CD8-positive, alpha-beta T cell (primary cell): ENCODE measurements at regions of chr12 and their contacts with region 1.

Region 1: DNA sequence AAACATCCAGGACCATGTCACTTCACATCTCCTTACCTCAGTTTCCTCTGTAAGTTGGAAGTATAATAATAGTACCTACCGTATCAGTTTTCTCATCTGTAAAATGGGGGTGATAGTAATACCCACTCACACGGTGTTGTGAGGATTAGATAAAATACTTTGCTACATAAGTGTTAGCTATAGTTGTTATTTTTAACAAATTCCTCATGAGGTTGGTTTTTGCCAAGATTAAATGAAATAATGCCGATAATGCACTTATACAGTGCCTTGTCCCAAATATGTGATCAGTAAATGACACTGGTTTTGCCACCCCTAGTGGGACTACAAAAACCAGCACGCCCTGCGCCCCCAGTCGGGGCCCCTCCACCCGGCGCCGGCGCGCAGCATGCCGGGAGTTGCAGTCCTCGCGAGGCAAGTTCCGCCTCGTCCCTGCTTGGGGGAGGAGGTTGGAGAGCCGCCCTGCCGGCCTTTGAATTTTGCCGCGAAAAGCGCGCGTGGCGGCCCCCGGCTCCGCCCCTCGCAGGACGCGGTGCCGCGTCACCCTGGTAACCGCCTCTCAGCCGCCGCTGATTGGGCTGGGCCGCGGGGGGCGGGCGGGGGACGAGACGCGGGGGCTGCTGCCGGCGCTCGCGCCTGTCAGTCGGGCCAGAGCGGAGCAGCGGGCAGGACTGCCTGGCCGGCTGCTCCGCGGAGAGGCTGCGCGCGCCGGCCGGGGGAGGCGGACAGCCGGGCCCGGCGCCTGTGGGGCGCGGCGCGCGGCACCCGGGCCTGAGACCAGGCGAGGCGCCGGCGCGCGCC is at the start of gene FAM222A:
- DNase-seq: peak; percentile 95 to 99 (median 98)
- ATAC-seq: peak; percentile 88
- H3K4me3 ChIP-seq: peak within 1 kb of the TSS; percentile 54 to 55
- H3K4me3 Mint-ChIP-seq: peak within 1 kb of the TSS; percentile 81
- H3K27ac ChIP-seq: no peak within 1 kb of the TSS
- H3K27ac Mint-ChIP-seq: no peak within 1 kb of the TSS
- H3K4me1 ChIP-seq: peaks cover 11% of the 10 kb centered on the region
- H3K4me1 Mint-ChIP-seq: no peaks in the 10 kb centered on the region
- H3K27me3 ChIP-seq: peaks cover 0 to 3% of the 10 kb centered on the region in 2 experiments
- H3K27me3 Mint-ChIP-seq: peaks cover 40% of the 10 kb centered on the region
- CTCF ChIP-seq: no peak
- total RNA-seq, gene FAM222A: 4.4 to 5.3 TPM

Region 2: DNA sequence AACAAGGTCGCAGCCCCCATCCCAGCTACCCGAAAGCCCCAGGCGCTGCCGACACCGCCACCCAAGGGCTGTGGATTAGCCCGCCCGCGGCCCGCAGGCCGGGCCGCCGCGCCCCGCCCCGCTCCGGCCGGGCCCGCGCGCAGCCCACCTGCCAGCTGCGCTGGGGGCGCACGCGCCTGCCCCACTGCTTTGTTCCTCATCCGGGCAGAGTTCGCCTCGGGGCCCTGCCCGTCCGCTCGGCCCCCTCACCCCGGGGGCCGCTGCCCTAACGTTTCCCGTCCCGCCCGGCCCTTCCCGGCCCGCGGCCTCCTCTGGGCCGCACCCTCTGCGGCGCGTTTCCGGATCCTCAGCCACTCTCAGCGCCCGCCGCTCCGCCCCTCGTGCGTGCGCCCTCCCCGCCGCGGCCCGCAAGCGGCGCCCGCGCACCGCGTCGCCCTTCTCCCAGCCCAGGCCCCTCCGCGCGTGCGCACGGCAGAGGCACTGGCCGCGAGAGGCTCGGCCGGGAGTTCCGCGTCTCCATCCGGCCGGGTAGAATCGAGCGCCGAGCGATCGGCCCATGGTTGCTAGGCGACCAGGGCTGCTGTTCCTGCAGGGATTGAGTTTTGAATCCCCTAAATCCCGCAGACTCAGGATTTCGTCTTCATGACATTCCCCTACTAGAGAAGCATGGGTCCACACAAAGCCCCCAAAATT is 1952.4 kb before region 1 on chr12 and contains the start of gene PRDM4:
- CTCF ChIA-PET with region 1: no interaction called
- POLR2A ChIA-PET with region 1: no interaction called
- intact Hi-C with region 1: loop called in 1 of 2 experiments (anchors 5 kb)
- DNase-seq: peak; percentile 76 to 97 (median 88)
- ATAC-seq: peak; percentile 95
- H3K4me3 ChIP-seq: peak within 1 kb of the TSS; percentile 76 to 82
- H3K4me3 Mint-ChIP-seq: peak within 1 kb of the TSS; percentile 89
- H3K27ac ChIP-seq: peak within 1 kb of the TSS; percentile 80 to 83
- H3K27ac Mint-ChIP-seq: peak within 1 kb of the TSS; percentile 90
- H3K4me1 ChIP-seq: peaks cover 31% of the 10 kb centered on the region
- H3K4me1 Mint-ChIP-seq: peaks cover 44% of the 10 kb centered on the region
- H3K27me3 ChIP-seq: no peaks in the 10 kb centered on the region
- H3K27me3 Mint-ChIP-seq: no peaks in the 10 kb centered on the region
- CTCF ChIP-seq: no peak
- total RNA-seq, gene PRDM4: 44.9 to 46.0 TPM

Region 3: DNA sequence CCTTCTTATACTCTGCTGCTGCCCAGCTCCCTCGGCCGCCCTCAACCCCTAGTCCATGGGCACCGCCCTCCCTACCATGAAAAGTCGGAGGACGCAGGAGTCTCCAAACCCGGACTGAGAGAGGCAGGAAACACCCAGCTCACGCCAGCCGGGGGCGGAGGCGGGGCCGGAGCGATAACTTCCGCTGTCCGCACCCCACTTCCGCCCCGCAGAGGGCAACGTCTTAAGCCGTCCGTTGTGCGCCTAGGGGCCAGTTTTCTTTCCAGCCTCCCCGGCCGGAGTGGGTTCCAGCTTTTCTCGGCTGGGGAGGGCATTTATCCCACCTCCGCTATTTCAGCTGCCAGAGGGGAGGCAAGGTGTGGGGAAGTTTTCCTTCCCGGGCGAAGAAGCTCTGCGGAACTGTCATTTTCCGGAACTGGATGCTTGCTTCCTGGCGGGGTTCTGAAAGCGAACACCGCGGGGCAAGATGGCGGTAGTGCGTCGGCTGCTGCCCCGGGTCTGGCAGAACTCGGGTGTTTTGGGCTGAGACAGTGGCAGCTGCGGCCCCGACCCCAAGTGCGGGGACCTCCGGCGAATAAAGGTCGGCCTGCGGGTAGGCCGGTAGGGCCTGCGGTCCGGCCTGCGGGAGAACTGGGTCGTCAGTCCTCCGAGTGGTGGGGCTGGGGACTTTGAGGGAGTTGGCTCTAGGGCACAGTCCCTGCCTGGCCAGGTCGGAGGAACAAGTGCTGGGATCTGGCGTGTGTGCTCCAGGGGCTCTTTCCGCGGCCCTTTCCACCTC is 236.0 kb before region 1 on chr12 and contains the starts of genes KCTD10 and UBE3B:
- CTCF ChIA-PET with region 1: no interaction called
- POLR2A ChIA-PET with region 1: no interaction called
- intact Hi-C with region 1: loop called (anchors 1 kb)
- DNase-seq: peak; percentile 73 to 94 (median 86)
- ATAC-seq: peak; percentile 90
- H3K4me3 ChIP-seq: peak within 1 kb of the TSS; percentile 92 to 94
- H3K4me3 Mint-ChIP-seq: peak within 1 kb of the TSS; percentile 97
- H3K27ac ChIP-seq: peak within 1 kb of the TSS; percentile 76 to 94
- H3K27ac Mint-ChIP-seq: peak within 1 kb of the TSS; percentile 98
- H3K4me1 ChIP-seq: peaks cover 35% of the 10 kb centered on the region
- H3K4me1 Mint-ChIP-seq: peaks cover 51% of the 10 kb centered on the region
- H3K27me3 ChIP-seq: no peaks in the 10 kb centered on the region
- H3K27me3 Mint-ChIP-seq: no peaks in the 10 kb centered on the region
- CTCF ChIP-seq: no peak
- total RNA-seq, gene KCTD10: 26.2 to 31.3 TPM
- total RNA-seq, gene UBE3B: 16.5 to 17.8 TPM

Region 4: DNA sequence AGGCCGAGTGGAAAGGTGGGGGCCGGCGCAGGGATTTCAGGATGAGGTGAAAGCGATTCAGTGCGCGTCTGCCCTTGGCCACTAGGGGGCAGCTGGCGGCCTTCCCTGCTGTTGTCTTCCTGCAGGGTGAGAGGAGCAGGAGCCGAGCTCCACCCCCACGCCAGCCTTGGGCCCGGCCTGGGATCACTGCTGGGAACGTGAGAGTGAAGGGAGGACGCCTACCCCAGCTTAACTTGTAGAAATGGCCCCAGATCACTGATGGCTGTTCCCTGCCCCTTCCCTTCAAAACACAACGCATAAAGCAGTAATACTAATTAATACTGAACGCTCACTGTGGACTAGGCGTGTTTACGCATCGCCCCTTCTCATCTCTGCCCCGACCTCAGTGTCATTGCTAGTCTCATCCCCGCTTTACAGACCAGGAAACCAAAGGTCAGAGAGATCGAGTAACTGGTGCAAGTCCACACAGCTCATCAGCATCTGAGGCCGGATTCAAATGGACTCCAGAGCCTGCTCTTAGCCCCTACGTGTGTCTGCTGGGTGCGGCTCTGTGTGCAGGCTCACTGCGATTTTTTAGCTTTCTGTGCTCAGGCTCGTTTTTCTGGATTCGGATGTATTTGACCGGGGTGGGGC is 115.5 kb before region 1 on chr12:
- CTCF ChIA-PET with region 1: interaction called, 7 read pairs
- POLR2A ChIA-PET with region 1: no interaction called
- intact Hi-C with region 1: loop called in 1 of 2 experiments (anchors 2 kb)
- DNase-seq: peak; percentile 31 to 76 (median 64)
- ATAC-seq: peak; percentile 70
- H3K4me3 ChIP-seq: no peak overlapping the region
- H3K4me3 Mint-ChIP-seq: no peak overlapping the region
- H3K27ac ChIP-seq: no peak overlapping the region
- H3K27ac Mint-ChIP-seq: no peak overlapping the region
- H3K4me1 ChIP-seq: peaks cover 11% of the 10 kb centered on the region
- H3K4me1 Mint-ChIP-seq: peaks cover 23% of the 10 kb centered on the region
- H3K27me3 ChIP-seq: no peaks in the 10 kb centered on the region
- H3K27me3 Mint-ChIP-seq: no peaks in the 10 kb centered on the region
- CTCF ChIP-seq: peak; percentile 85

Region 5: GRCh38 chr12:109995686-109996482 is 282.5 kb after region 1 on chr12 and contains the start of gene GIT2:
- CTCF ChIA-PET with region 1: no interaction called
- POLR2A ChIA-PET with region 1: no interaction called
- intact Hi-C with region 1: loop called in 1 of 2 experiments (anchors 5 kb)
- DNase-seq: peak; percentile 87 to 98 (median 94)
- ATAC-seq: peak; percentile 76
- H3K4me3 ChIP-seq: peak within 1 kb of the TSS; percentile 79 to 89
- H3K4me3 Mint-ChIP-seq: peak within 1 kb of the TSS; percentile 97
- H3K27ac ChIP-seq: peak within 1 kb of the TSS; percentile 70 to 85
- H3K27ac Mint-ChIP-seq: peak within 1 kb of the TSS; percentile 89
- H3K4me1 ChIP-seq: peaks cover 34% of the 10 kb centered on the region
- H3K4me1 Mint-ChIP-seq: peaks cover 71% of the 10 kb centered on the region
- H3K27me3 ChIP-seq: no peaks in the 10 kb centered on the region
- H3K27me3 Mint-ChIP-seq: no peaks in the 10 kb centered on the region
- CTCF ChIP-seq: no peak
- total RNA-seq, gene GIT2: 47.6 to 57.9 TPM

Region 6: DNA sequence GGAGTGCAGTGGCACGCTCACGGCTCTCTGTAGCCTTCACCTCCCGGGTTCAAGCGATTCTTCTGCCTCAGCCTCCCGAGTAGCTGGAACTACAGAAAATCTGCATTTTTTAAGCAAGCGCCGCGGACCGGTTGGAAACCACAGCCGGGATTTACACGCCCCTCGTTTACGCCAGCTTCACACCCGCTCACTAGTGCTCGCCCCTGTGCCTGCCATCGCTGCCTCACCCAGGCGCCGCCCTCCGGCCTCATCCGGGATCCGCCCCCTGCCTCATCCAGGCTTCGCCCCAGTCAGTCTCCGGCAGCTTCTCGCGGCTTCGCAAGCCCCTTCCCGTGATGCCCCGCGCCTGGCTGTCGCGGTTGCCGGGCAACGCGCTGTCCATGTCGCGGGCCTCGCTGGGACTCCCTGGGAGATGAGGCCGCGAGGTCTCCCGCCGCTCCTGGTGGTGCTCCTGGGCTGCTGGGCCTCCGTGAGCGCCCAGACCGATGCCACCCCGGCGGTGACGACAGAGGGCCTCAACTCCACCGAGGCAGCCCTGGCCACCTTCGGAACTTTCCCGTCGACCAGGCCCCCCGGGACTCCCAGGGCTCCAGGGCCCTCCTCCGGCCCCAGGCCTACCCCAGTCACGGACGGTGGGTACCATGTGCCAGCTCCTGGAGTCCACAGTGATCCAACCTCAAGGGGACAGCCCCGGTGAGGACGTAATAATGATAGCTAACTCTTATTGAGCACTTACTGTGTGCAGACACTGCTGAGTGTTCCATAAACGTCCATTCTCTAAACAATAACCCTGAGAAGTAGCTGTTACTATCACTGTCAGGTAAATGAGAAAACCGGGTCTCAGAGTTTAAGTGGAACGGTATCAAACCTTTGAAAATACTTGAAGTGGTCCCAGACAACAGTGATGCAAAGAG is 900.6 kb after region 1 on chr12 and contains the start of gene TCTN1:
- CTCF ChIA-PET with region 1: no interaction called
- POLR2A ChIA-PET with region 1: no interaction called
- intact Hi-C with region 1: loop called in 1 of 2 experiments (anchors 10 kb)
- DNase-seq: peak; percentile 90 to 97 (median 95)
- ATAC-seq: peak; percentile 100
- H3K4me3 ChIP-seq: peak within 1 kb of the TSS; percentile 75 to 76
- H3K4me3 Mint-ChIP-seq: peak within 1 kb of the TSS; percentile 88
- H3K27ac ChIP-seq: peak within 1 kb of the TSS; percentile 78 to 83
- H3K27ac Mint-ChIP-seq: peak within 1 kb of the TSS; percentile 85
- H3K4me1 ChIP-seq: peaks cover 5% of the 10 kb centered on the region
- H3K4me1 Mint-ChIP-seq: peaks cover 7% of the 10 kb centered on the region
- H3K27me3 ChIP-seq: no peaks in the 10 kb centered on the region
- H3K27me3 Mint-ChIP-seq: no peaks in the 10 kb centered on the region
- CTCF ChIP-seq: no peak
- total RNA-seq, gene TCTN1: 4.7 to 4.9 TPM